Aorta (tissue), 5 donors: ENCODE measurements at regions of chr2 and their contacts with region 1.

Region 1: DNA sequence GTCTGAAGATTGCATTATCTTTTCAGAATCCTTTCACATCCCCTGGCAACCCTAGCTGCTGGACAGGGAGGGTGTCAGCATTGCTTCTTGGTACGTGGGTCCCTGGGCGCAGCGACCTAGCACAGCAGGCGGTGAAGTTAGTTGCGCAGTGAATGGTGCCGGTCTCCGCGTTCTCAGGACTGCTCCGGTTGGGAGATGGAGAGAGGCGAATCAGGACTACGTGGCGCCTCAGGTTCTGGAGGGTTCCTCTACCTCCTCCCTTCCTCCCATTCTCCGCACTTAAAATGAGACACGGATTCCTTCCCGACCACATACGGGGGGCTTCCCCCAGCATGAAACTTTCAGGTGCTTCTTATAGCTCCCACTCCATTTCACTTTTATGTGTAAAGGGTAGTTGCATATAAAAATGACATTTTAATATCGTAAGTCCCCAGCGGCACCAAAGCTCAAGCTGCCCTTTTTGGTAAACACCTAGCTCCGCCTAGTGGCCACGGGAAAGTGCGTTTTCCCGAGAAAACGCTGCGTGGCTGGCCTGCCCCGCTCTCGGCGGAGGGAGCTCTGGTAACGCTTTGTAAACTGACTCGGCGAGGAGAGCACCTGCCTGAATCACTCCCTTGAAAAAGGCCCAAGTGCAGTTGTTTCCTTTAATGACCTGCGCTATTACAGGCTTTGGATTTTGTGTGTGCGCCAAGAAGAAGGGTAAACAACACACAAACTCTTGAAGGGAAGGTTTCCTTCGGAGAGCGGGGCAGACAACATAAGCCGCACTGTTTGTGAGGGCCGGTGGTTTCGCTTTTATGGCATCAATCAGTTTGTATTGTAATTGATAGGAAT is 32.9 kb upstream of the INHBB start:
- DNase-seq: peak; percentile 88 to 92
- ATAC-seq: peak; percentile 86
- H3K4me3 ChIP-seq: peak overlapping the region; percentile 27 to 42
- H3K27ac ChIP-seq: no peak overlapping the region
- H3K4me1 ChIP-seq: no peaks in the 10 kb centered on the region
- H3K27me3 ChIP-seq: no peaks in the 10 kb centered on the region

Region 2: DNA sequence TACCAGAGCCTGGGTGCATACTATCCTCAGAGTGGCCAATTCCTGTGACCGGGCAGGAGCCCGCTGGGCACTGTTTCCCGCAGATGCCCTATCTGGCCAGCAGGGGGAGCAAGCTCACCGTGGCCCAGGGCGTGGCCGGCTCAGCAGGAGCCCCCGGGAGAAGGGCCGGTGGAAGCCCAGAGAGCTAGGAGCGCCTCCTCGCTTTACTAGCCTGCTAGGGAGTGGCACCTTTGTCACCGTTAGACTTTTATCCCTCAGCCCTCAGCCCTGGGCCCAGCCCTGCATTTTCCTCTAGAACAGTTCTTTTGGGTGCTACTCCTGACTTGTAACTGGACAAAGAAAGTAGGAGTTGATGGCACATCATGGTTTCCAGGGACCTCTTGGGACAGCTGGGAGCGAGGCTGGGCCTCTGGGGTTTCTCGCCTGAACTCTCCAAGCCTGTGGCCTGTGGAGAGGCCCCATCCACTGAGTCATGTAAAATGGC is 610.1 kb before region 1 on chr2:
- intact Hi-C with region 1: loop called in 1 of 2 experiments (anchors 10 kb)
- DNase-seq: peak; percentile 73 to 85
- ATAC-seq: peak; percentile 92
- H3K4me3 ChIP-seq: no peak overlapping the region
- H3K27ac ChIP-seq: no peak overlapping the region
- H3K4me1 ChIP-seq: no peaks in the 10 kb centered on the region
- H3K27me3 ChIP-seq: no peaks in the 10 kb centered on the region

Region 3: GRCh38 chr2:119759451-119760236 is 553.4 kb before region 1 on chr2 and contains the start of gene PTPN4:
- intact Hi-C with region 1: loop called in 1 of 2 experiments (anchors 10 kb)
- DNase-seq: peak; percentile 98
- ATAC-seq: peak; percentile 99
- H3K4me3 ChIP-seq: peak within 1 kb of the TSS; percentile 70 to 95
- H3K27ac ChIP-seq: peak within 1 kb of the TSS; percentile 12 to 29
- H3K4me1 ChIP-seq: peaks cover 0 to 6% of the 10 kb centered on the region in 2 donors
- H3K27me3 ChIP-seq: no peaks in the 10 kb centered on the region
- total RNA-seq, gene PTPN4: 20.4 to 39.0 TPM

Region 4: DNA sequence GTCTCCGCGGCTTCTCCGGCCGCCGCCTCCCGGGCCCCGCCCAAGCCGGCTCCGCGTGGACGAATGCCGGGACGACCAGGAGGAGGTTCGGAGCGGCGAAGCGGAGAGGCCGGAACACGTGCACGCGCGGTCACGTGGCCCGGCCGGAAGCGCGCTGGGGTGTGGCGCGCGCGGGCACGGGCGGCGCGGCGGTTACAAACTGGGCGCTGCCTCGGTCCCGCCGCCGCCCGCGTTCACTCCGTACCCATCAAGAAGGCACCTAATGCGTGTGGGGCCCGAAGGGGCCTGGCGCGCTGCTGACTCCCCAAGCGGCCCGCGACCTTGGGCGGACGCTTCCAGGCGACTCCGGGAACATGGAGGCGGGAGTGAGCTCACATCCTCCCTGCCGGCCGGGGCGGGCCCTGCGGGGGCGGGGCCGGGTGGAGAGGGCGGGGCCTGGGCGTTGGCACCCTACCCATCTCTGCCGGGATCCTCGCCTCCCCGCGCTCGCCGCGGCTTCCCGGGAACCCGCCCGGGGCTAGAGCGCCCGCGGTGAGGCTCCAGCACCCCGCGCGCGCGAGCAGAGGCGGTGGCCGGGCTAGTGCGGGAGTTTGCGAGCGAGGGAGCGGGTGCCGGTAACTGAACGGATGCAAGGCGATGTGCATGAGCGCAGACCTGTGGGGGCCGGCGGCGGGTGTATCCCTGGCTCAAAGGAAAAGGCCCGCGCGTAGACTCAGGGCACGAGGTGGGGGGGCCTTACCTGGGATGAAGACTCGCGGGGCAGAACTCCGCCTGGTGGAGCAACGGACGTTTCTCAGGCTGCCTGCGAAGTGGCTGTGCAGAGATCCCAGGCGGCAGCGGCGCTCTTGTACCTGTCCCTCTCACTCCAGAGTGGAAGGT is 89.8 kb before region 1 on chr2 and contains the start of gene TMEM185B:
- intact Hi-C with region 1: loop called in 1 of 2 experiments (anchors 5 kb)
- DNase-seq: peak; percentile 92 to 97
- ATAC-seq: peak; percentile 97
- H3K4me3 ChIP-seq: peak within 1 kb of the TSS; percentile 46 to 65
- H3K27ac ChIP-seq: peak within 1 kb of the TSS in 1 of 2 donors; percentile 20
- H3K4me1 ChIP-seq: no peaks in the 10 kb centered on the region
- H3K27me3 ChIP-seq: no peaks in the 10 kb centered on the region
- total RNA-seq, gene TMEM185B: 17.5 to 20.8 TPM

Region 5: DNA sequence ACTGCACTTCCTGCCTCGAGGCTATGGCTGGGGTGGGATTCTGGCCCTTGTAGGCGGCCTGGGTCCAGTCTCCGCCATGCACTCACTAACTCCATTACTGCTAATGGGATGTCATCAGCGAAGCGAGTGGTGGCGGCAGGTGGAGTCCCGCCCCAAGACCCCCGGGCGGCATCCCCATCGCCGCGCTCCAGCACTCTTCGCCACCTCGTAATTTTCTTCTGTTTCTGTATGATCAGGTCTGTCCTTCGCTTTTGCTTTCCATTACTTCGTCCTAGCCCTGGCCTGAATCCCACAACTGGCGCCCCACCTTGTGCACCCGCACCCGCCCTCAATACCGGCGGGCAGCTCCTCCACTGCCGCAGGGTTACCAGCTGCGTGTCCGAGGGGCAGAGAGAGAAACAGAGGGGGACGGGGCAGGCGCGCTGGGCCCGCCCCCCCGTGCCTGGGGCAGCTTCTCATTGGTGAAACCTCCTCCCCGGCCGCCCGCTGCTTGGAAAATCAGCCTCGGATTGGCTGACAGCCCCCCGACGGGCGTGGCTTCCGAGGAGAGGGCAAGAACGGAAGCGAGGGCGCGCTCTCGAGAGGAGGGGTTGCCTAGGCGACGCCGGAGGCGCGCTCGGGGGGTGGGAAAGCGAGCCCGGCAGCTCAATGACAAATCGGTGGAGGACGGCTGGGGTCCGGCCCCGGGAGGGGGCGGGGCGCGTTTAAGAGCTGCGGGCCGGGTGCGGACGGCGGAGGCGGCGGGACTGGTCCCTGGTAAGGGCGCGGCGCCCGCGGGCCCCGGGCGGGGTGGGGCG is 60.7 kb before region 1 on chr2 and contains the start of gene RALB:
- intact Hi-C with region 1: loop called (anchors 2 to 5 kb)
- DNase-seq: peak; percentile 100
- ATAC-seq: peak; percentile 98
- H3K4me3 ChIP-seq: peak within 1 kb of the TSS; percentile 62 to 66
- H3K27ac ChIP-seq: peak within 1 kb of the TSS in 1 of 2 donors; percentile 29
- H3K4me1 ChIP-seq: peaks cover 0 to 5% of the 10 kb centered on the region in 2 donors
- H3K27me3 ChIP-seq: no peaks in the 10 kb centered on the region
- total RNA-seq, gene RALB: 43.3 to 55.0 TPM

Region 6: GRCh38 chr2:120508567-120509041 is 195.5 kb after region 1 on chr2:
- intact Hi-C with region 1: no loop called
- DNase-seq: peak in 1 of 2 donors; percentile 65
- ATAC-seq: peak; percentile 40
- H3K4me3 ChIP-seq: no peak overlapping the region
- H3K27ac ChIP-seq: no peak overlapping the region
- H3K4me1 ChIP-seq: no peaks in the 10 kb centered on the region
- H3K27me3 ChIP-seq: no peaks in the 10 kb centered on the region